CD4-positive, alpha-beta memory T cell (primary cell): ENCODE measurements at regions of chr9 and their contacts with region 1.

Region 1: GRCh38 chr9:75200892-75201470 is 112.7 kb downstream of the OSTF1 start:
- DNase-seq: peak in 4 of 5 donors; percentile 33 to 47 (median 41)
- H3K4me3 ChIP-seq: no peak overlapping the region
- H3K4me3 Mint-ChIP-seq: no peak overlapping the region
- H3K27ac ChIP-seq: no peak overlapping the region
- H3K27ac Mint-ChIP-seq: peak overlapping the region in 2 of 7 donors; percentile 18 to 27
- H3K4me1 ChIP-seq: no peaks in the 10 kb centered on the region
- H3K4me1 Mint-ChIP-seq: peaks cover 0 to 3% (median 2%) of the 10 kb centered on the region in 4 donors
- H3K27me3 ChIP-seq: no peaks in the 10 kb centered on the region
- H3K27me3 Mint-ChIP-seq: no peaks in the 10 kb centered on the region

Region 2: GRCh38 chr9:75226403-75227139 is 25.6 kb after region 1 on chr9:
- CTCF ChIA-PET with region 1: no interaction called
- POLR2A ChIA-PET with region 1: no interaction called
- intact Hi-C with region 1: no loop called
- DNase-seq: no peak
- H3K4me3 ChIP-seq: no peak overlapping the region
- H3K4me3 Mint-ChIP-seq: no peak overlapping the region
- H3K27ac ChIP-seq: no peak overlapping the region
- H3K27ac Mint-ChIP-seq: no peak overlapping the region
- H3K4me1 ChIP-seq: no peaks in the 10 kb centered on the region
- H3K4me1 Mint-ChIP-seq: no peaks in the 10 kb centered on the region
- H3K27me3 ChIP-seq: no peaks in the 10 kb centered on the region
- H3K27me3 Mint-ChIP-seq: no peaks in the 10 kb centered on the region

Region 3: GRCh38 chr9:75238311-75238978 is 37.5 kb after region 1 on chr9:
- CTCF ChIA-PET with region 1: interaction called, 25 read pairs
- POLR2A ChIA-PET with region 1: no interaction called
- intact Hi-C with region 1: loop called (anchors 1 kb)
- DNase-seq: peak; percentile 45 to 66 (median 49)
- H3K4me3 ChIP-seq: no peak overlapping the region
- H3K4me3 Mint-ChIP-seq: no peak overlapping the region
- H3K27ac ChIP-seq: no peak overlapping the region
- H3K27ac Mint-ChIP-seq: peak overlapping the region in 1 of 7 donors; percentile 25
- H3K4me1 ChIP-seq: no peaks in the 10 kb centered on the region
- H3K4me1 Mint-ChIP-seq: no peaks in the 10 kb centered on the region
- H3K27me3 ChIP-seq: no peaks in the 10 kb centered on the region
- H3K27me3 Mint-ChIP-seq: no peaks in the 10 kb centered on the region

Region 4: GRCh38 chr9:75265525-75265972 is 64.6 kb after region 1 on chr9:
- CTCF ChIA-PET with region 1: no interaction called
- POLR2A ChIA-PET with region 1: no interaction called
- intact Hi-C with region 1: loop called (anchors 2 kb)
- DNase-seq: peak in 4 of 5 donors; percentile 34 to 45 (median 41)
- H3K4me3 ChIP-seq: no peak overlapping the region
- H3K4me3 Mint-ChIP-seq: peak overlapping the region in 1 of 8 donors; percentile 16
- H3K27ac ChIP-seq: no peak overlapping the region
- H3K27ac Mint-ChIP-seq: no peak overlapping the region
- H3K4me1 ChIP-seq: no peaks in the 10 kb centered on the region
- H3K4me1 Mint-ChIP-seq: peaks cover 0 to 5% (median 2%) of the 10 kb centered on the region in 4 donors
- H3K27me3 ChIP-seq: no peaks in the 10 kb centered on the region
- H3K27me3 Mint-ChIP-seq: no peaks in the 10 kb centered on the region